ENCODE measurements at regions of chr9 and their contacts with region 1.

Region 1: DNA sequence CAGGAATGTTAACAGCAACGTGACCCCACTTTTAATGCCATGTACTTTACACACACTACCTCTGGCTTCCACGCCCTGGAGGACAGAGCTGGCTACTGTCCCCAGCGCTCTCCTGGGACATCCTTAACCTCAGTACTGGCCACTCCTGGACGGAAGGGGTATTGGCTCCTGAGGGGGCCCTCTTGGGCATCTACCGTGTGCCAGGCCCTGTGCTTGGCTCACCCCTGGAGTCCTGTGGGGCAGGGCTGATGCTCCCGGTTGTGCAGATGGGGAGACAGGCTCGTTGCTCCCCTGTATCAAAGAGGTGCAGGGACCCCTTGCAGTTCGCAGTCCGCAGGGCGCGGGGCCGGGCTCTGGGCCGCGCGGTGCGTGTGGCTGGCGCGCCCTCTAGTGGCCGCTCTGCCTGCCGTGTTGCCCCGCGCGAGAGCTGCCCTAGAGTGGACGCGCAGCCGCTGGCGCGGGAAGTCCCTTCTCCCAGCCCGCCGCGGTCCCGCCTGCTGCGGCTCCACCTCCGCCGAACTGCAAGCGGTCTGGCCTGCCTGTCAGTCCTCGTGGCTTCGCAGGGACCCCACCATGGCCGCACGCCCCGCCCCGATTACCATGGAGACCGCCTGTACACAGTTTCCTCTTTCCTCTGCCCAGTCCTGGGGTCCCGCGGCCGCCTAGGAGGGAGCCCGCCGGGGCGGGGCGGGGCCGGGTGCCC is at the start of gene WDR38:
- H3K4me3 ChIP-seq: peak within 1 kb of the TSS; percentile 47
- H3K27ac ChIP-seq: no peak within 1 kb of the TSS
- H3K4me1 ChIP-seq: no peaks in the 10 kb centered on the region
- CTCF ChIP-seq: peak; percentile 98

Region 2: DNA sequence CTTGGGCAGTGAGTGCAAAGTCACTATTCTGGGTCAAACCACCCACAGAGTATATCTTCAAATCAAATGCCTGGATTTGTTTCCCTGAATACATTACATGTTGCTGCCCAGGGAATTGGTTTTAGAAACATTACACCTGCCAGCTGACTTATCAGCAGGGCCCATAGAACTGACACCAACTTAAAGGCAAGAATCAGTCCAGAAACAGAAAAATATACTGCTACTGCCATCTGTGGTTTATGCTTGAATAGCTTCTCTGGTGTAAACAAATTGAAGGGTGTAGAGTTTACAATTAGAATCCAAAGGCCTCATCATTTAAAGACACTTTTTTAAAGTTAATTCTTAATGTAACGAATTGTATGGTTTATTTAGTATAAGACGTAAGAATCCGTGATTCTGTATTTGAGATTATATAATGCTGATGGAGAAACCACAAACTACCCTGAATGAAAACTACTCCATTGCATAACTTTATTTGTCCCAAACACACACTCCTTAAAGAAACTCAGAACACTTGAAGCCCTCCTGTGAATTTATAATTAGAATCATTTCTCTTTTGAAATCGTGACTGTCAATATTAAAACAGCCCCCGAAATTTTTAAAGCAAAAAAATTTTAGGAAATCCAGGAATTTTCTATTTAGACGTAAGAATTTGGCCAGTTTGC is 88.1 kb before region 1 on chr9:
- CTCF ChIA-PET with region 1: interaction called, 1,257 read pairs
- POLR2A ChIA-PET with region 1: interaction called, 201 read pairs
- H3K4me3 ChIP-seq: no peak overlapping the region
- H3K27ac ChIP-seq: no peak overlapping the region
- H3K4me1 ChIP-seq: peaks cover 27% of the 10 kb centered on the region
- CTCF ChIP-seq: no peak

Region 3: GRCh38 chr9:124794902-124795491 is 58.0 kb before region 1 on chr9:
- CTCF ChIA-PET with region 1: interaction called, 73 read pairs
- POLR2A ChIA-PET with region 1: interaction called, 4 read pairs
- H3K4me3 ChIP-seq: no peak overlapping the region
- H3K27ac ChIP-seq: no peak overlapping the region
- H3K4me1 ChIP-seq: no peaks in the 10 kb centered on the region
- CTCF ChIP-seq: peak; percentile 44; the same call in 1 of the 2 replicates

Region 4: DNA sequence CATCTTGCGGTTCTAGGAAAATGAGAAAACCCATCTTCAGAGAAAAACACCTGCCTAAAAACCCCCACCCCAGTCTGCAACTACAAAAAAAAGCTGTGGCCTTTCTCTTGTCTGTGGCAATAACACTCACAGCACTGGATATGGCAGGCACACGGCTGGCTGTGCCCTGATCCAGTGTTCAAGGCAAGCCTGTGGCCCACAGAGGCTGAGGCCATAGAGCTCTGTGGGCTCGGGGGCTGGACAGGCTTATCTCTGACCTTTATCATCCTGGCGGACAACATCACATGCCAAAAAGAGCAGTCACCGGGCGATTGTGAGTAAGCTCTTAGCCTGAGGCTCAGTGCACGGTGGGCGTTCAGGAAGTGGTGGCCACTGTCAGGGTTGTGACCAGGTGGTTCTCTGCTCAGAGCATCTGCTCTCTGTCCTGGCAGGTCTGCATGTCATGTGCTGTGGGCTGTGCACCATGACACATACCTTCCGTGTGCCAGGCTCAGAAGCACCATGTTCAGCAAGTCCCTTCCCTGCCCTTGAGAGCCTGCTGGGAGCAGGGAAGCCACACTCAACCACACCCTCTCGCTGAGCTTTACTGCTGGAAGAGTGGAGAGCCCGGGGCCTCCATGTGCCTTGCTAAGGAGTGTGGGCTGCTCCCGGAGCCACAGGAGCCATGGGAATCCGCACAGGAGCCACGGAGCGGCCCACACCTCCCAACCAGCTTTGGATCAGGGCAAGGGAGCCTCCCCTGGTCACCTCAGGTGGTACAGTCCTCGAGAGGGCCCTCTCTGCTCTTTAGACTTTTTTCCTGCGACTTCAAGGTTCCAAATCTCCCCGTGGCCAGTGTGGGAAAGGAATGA is 34.3 kb before region 1 on chr9:
- CTCF ChIA-PET with region 1: interaction called, 75 read pairs
- POLR2A ChIA-PET with region 1: interaction called, 3 read pairs
- H3K4me3 ChIP-seq: no peak overlapping the region
- H3K27ac ChIP-seq: no peak overlapping the region
- H3K4me1 ChIP-seq: no peaks in the 10 kb centered on the region
- CTCF ChIP-seq: no peak

Region 5: DNA sequence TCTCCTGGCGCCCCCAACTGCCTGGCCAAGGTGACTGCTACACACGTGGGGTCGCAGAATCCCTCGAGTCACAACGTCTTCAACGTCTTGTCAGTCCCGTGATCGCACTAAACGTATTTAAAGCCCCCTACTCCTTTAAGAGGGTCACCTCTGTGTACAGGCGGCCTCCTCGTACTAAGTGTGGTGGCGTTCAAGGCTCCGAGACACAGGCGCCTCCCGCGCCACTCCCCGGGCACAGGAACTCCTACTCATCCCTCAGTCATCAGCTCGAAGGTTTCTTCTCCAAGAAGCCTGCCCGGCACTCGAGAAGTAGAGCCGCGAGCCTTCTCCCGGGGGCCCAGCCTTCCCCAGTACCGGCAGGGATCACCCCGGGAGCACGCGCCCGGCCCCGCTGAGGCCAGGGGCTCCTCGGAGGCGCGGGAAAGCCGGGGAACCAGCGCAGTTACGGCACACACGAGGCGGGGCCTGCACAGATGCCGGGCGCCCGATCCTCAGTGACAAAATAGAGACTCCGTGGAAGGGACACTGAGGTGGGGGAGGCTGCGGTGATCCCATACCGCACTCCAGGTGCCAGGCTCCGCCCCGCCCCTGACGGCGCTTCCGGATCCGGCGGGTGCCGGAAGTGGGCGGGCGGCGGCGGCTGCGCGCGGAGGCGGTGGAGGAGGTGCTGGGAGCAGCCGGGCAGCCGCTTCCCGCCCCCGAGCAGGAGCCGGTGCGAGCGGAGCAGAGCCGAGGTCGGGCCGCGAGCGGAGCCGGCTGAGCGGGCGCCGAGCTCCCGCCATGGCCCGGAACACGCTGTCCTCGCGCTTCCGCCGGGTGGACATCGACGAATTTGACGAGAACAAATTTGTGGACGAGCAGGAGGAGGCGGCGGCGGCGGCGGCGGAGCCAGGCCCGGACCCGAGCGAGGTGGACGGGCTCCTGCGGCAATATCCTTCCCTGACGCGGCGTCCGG is 15.8 kb after region 1 on chr9:
- CTCF ChIA-PET with region 1: interaction called, 10 read pairs
- POLR2A ChIA-PET with region 1: interaction called, 10 read pairs
- H3K4me3 ChIP-seq: peak overlapping the region; percentile 91
- H3K27ac ChIP-seq: peak overlapping the region; percentile 78
- H3K4me1 ChIP-seq: peaks cover 4% of the 10 kb centered on the region; the same call in 1 of the 2 replicates
- CTCF ChIP-seq: 0 out of 2 replicates have a peak, but pooled peaks have one; percentile 65

Region 6: GRCh38 chr9:125272697-125273096 is 419.7 kb after region 1 on chr9:
- CTCF ChIA-PET with region 1: no interaction called
- POLR2A ChIA-PET with region 1: no interaction called
- H3K4me3 ChIP-seq: no peak overlapping the region
- H3K27ac ChIP-seq: no peak overlapping the region
- H3K4me1 ChIP-seq: peaks cover 8% of the 10 kb centered on the region
- CTCF ChIP-seq: no peak

Measured in HEK293 (cell line).